Activated CD8-positive, alpha-beta memory T cell treated with anti-CD3 and anti-CD28 coated beads, Interleukin-2, amount 10 ng/mL, durations not matched to agents 7 days and 5 days (primary cell): ENCODE measurements at regions of chr12 and their contacts with region 1.

Region 1: DNA sequence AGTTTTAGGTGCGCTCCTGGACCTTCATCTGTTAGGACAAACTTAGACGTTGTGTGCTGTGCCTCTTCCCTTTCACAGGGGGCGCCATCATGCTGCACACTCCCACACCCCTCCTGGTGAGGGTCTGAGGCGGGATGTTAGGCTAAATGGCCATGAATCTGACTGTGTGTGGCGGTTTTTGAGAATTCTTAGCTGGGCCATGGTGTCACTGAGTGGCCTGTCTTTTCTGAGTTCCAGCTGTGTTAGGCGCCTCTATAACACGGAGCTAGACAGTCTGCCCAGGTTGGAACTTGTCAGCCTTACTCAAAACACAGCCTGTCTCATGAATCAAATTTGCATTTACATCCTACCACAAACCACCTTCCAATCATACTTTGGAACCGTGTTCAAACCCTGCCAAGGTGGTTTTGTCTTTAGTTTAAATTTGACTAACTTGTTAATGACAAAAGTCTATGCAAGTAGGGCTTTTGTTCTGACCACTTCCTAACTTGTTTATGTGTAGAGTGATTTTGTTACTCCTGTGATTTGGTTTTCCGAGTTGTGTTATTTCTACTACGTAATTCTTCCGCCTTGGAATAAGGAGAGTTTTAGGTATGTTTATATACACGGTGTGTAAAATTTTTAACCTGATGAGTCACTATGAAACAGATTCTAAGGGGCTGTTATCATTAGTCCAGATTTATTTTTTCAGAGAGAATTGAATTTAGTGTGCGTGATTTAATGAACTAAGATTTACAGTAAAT is 19.6 kb downstream of the ACVR1B start:
- DNase-seq: peak; percentile 84
- ATAC-seq: peak; percentile 88
- H3K4me3 Mint-ChIP-seq: peak overlapping the region; percentile 43
- H3K27ac Mint-ChIP-seq: peak overlapping the region; percentile 76
- H3K4me1 Mint-ChIP-seq: peaks cover 61% of the 10 kb centered on the region
- H3K27me3 Mint-ChIP-seq: peaks cover 55% of the 10 kb centered on the region

Region 2: DNA sequence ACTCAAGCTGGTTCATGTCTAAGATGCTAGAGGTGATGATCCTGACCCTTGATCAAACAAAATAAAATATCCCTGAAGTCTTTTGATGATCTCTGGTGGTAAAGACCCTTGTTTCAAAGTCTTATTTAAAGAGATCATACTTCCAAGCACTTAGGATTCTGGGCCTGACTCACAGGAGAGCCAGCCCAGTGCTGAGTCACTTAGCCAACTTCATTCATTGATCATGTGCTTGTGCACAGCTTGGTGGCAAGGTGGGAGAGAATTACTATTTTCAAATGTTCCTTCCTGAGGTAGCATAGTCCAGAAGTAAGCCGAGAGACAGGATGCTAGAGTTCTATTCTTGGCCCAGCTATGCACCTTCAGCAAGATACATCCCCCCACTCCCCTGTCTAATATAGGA is 339.5 kb before region 1 on chr12:
- CTCF ChIA-PET with region 1: no interaction called
- DNase-seq: no peak
- ATAC-seq: no peak
- H3K4me3 Mint-ChIP-seq: no peak overlapping the region
- H3K27ac Mint-ChIP-seq: no peak overlapping the region
- H3K4me1 Mint-ChIP-seq: no peaks in the 10 kb centered on the region
- H3K27me3 Mint-ChIP-seq: peaks cover 33% of the 10 kb centered on the region

Region 3: DNA sequence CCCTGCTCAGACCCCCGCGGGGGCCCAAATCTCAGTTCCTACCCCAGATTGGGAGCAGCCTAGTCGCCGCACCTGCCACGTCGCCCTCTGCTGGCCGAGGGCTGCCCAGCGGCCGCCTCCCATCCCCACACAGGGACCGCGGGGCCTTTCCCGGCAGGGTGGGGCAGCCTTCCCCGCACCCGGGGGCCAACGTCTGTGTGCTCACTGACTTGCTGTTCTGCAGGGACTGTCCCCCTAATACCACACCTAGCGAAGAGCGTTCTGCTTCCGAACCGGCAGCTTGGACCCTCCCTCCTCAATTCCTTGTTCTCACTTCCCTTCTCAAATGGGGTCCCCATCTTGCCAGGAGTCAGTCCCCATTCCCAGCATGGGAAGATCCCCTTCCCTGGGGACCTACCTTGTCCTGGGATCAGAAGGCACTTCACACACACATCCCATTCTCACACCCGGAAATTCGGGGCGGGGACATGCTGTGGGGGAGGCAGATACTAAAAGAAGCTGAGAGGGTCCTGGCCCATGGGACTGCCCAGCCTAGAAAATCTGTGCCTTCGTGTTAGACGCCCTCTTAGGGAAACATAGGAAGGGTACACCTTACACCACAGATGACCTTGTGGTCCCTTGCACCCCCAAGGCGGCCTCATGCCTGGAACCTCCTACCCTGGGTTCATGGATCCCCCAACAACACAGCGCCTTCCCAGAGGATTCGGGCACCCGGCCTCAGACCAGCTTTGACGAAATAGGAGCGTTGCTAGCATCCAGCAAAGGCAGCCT is 47.4 kb before region 1 on chr12:
- CTCF ChIA-PET with region 1: interaction called, 12 read pairs
- DNase-seq: peak; percentile 62
- ATAC-seq: peak; percentile 78
- H3K4me3 Mint-ChIP-seq: no peak overlapping the region
- H3K27ac Mint-ChIP-seq: no peak overlapping the region
- H3K4me1 Mint-ChIP-seq: peaks cover 4% of the 10 kb centered on the region
- H3K27me3 Mint-ChIP-seq: peaks cover 7% of the 10 kb centered on the region

Region 4: GRCh38 chr12:51934080-51934479 is 37.0 kb before region 1 on chr12:
- CTCF ChIA-PET with region 1: no interaction called
- DNase-seq: no peak
- ATAC-seq: no peak
- H3K4me3 Mint-ChIP-seq: no peak overlapping the region
- H3K27ac Mint-ChIP-seq: no peak overlapping the region
- H3K4me1 Mint-ChIP-seq: no peaks in the 10 kb centered on the region
- H3K27me3 Mint-ChIP-seq: peaks cover 22% of the 10 kb centered on the region

Region 5: DNA sequence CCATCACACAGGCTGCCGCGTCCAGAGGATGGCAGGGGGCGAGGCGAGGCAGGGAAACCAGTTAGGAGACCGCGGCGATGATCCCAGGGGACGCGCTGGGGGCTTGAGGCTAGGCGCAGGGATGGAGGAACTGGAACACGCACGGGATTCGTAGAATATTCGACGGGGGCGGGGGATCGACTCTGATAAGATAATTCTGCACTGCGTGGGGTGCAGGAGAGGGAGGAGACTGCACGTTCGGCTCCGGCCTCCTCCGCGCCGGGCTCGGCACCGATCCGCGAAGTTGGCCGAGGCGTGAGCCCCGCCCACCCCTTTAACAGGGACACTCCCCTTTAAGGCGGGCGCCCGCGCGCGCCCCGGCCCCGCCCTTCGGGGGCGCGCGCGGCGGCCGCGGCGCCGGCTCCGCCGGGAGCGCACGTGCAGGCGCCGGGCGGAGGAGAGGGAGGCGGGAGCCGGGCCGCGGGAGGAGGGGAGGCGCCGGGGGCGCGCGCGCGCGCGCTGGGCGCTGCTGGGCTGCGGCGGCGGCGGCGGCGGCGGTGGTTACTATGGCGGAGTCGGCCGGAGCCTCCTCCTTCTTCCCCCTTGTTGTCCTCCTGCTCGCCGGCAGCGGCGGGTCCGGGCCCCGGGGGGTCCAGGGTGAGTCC is 19.8 kb before region 1 on chr12 and contains the start of gene ACVR1B:
- CTCF ChIA-PET with region 1: interaction called, 14 read pairs
- DNase-seq: peak; percentile 88
- ATAC-seq: peak; percentile 99
- H3K4me3 Mint-ChIP-seq: peak within 1 kb of the TSS; percentile 83
- H3K27ac Mint-ChIP-seq: peak within 1 kb of the TSS; percentile 21
- H3K4me1 Mint-ChIP-seq: peaks cover 10% of the 10 kb centered on the region
- H3K27me3 Mint-ChIP-seq: peaks cover 60% of the 10 kb centered on the region
- total RNA-seq, gene ACVR1B: 3.5 to 4.3 TPM

Region 6: DNA sequence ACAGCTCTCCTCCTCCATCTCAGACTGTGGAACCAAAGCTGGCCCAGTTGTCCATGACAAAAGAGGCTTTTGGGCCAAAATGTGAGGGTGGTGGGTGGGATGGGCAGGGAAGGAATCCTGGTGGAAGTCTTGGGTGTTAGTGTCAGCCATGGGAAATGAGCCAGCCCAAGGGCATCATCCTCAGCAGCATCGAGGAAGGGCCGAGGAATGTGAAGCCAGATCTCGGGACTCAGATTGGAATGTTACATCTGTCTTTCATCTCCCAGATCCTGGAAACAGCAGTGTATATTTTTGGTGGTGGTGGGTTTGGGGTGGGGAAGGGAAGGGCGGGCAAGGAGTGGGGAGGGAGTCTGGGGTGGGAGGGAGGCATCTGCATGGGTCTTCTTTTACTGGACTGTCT is 23.9 kb after region 1 on chr12:
- CTCF ChIA-PET with region 1: interaction called, 15 read pairs
- DNase-seq: no peak
- ATAC-seq: no peak
- H3K4me3 Mint-ChIP-seq: no peak overlapping the region
- H3K27ac Mint-ChIP-seq: no peak overlapping the region
- H3K4me1 Mint-ChIP-seq: peaks cover 4% of the 10 kb centered on the region
- H3K27me3 Mint-ChIP-seq: no peaks in the 10 kb centered on the region